ENCODE measurements at regions of chr15 and their contacts with region 1.

Region 1: DNA sequence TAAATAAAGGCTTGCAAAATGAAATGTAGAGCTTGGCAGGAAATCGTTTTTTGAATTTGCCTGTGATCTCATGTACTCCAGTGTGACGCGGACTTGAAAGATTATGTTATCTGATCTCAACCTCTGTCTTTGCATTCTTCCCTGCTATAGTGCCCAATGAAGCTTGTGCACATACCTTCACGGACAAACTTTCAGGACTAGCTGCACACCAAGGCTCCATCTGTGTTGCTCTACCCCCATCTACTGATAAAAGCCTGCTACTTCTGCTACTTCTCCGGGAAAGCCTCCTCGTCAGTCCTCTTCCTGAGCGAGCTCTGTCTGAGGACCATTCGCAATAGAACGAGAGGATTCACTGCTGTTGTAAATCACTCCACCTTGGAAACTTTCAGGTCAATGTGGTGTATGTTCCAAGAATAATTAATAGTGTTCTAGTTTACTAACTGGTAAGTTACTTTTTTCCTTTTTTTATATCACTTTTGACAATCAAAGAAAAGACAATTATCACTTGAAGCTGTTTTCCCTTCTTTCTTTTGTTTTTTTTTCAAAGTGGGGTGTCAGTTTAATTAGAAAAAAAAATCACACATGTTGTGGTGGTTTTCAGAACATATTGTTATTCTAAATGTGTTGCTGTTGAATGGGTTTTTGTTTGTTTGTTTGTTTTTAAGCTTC is 217.6 kb downstream of the ARRDC4 start:
- DNase-seq: no peak
- ATAC-seq: peak; percentile 86 to 90

Region 2: GRCh38 chr15:97890307-97890706 is 287.8 kb before region 1 on chr15:
- intact Hi-C with region 1: no loop called
- DNase-seq: no peak
- ATAC-seq: peak; percentile 34 to 71

Region 3: DNA sequence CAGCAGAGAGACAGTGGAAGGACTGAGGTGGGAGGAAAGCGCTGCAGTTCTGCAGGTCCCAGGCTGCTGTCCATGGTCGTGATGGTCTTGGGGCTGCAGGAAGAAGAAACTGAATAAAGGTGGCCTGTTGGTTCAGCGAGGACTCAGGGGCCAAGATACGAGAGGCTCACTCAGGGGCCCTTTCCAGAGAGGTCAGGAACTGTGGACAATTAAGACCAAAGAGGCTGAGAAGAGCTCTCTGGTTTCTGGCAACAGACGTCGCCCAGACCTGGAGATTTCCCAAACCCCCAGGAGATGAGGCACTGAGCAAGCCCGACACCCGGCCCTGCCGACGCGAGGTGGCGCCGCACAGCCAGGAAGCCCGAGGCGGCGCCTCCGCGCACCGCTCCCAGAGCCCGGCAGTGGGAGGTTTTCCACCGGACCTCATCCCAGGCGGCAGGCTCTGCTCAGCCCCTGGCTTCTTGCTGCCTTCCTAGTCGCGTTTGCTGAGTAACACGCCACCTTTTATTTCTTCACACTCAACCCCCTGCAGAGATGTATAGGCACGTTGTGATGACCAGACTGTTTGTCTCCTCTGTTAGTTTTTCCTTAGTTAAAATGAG is 274.0 kb before region 1 on chr15:
- intact Hi-C with region 1: loop called (anchors 2 to 10 kb)
- DNase-seq: peak; percentile 81
- ATAC-seq: peak; percentile 94 to 99